PC-3 (cell line): ENCODE measurements at regions of chr6 and their contacts with region 1.

Region 1: GRCh38 chr6:68634726-68635411 is at the start of gene ADGRB3:
- DNase-seq: peak; percentile 51
- ATAC-seq: peak; percentile 63
- H3K4me3 ChIP-seq: peak within 1 kb of the TSS; percentile 72
- H3K27ac ChIP-seq: no peak within 1 kb of the TSS
- H3K4me1 ChIP-seq: no peaks in the 10 kb centered on the region
- H3K27me3 ChIP-seq: peaks cover 70% of the 10 kb centered on the region
- CTCF ChIP-seq: no peak
- total RNA-seq, gene ADGRB3: 0.11 and 0.23 TPM in 2 replicates

Region 2: DNA sequence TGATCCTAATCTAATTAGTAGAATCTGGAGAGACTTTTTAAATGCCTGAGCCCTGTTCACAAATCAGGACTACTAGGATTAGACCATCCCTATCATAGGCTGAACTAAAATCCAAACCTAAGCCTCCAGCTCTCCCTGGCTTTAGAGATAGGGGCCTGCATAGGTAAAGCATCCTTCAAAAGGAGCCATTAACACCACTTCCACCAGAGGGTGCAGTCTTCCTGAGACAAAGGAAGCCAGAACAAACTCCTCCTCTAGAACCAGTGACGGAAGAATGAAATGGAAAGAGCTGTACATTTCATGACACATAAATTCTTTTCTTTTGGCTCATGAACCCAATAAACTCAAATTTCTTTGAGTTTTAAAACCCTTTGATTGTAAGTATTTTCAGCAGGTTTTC is 291.0 kb before region 1 on chr6:
- CTCF ChIA-PET with region 1: interaction called, 3 read pairs
- POLR2A ChIA-PET with region 1: no interaction called
- intact Hi-C with region 1: loop called (anchors 1 kb)
- DNase-seq: peak; percentile 83
- ATAC-seq: peak; percentile 96
- H3K4me3 ChIP-seq: no peak overlapping the region
- H3K27ac ChIP-seq: no peak overlapping the region
- H3K4me1 ChIP-seq: no peaks in the 10 kb centered on the region
- H3K27me3 ChIP-seq: no peaks in the 10 kb centered on the region
- CTCF ChIP-seq: peak; percentile 81

Region 3: GRCh38 chr6:68559070-68559469 is 75.8 kb before region 1 on chr6:
- CTCF ChIA-PET with region 1: no interaction called
- POLR2A ChIA-PET with region 1: no interaction called
- intact Hi-C with region 1: loop called (anchors 1 kb)
- DNase-seq: peak; percentile 6
- ATAC-seq: peak; percentile 65
- H3K4me3 ChIP-seq: peak overlapping the region; percentile 31; the same call in 1 of the 2 replicates
- H3K27ac ChIP-seq: peak overlapping the region; percentile 50
- H3K4me1 ChIP-seq: peaks cover 6% of the 10 kb centered on the region
- H3K27me3 ChIP-seq: no peaks in the 10 kb centered on the region
- CTCF ChIP-seq: no peak

Region 4: GRCh38 chr6:68572525-68572924 is 62.3 kb before region 1 on chr6:
- CTCF ChIA-PET with region 1: interaction called, 3 read pairs
- POLR2A ChIA-PET with region 1: no interaction called
- intact Hi-C with region 1: loop called (anchors 1 kb)
- DNase-seq: peak; percentile 64
- ATAC-seq: peak; percentile 81
- H3K4me3 ChIP-seq: no peak overlapping the region
- H3K27ac ChIP-seq: no peak overlapping the region
- H3K4me1 ChIP-seq: no peaks in the 10 kb centered on the region
- H3K27me3 ChIP-seq: no peaks in the 10 kb centered on the region
- CTCF ChIP-seq: peak; percentile 63

Region 5: GRCh38 chr6:68680264-68680663 is 45.4 kb after region 1 on chr6:
- CTCF ChIA-PET with region 1: no interaction called
- POLR2A ChIA-PET with region 1: no interaction called
- intact Hi-C with region 1: no loop called
- DNase-seq: no peak
- ATAC-seq: no peak
- H3K4me3 ChIP-seq: no peak overlapping the region
- H3K27ac ChIP-seq: no peak overlapping the region
- H3K4me1 ChIP-seq: no peaks in the 10 kb centered on the region
- H3K27me3 ChIP-seq: no peaks in the 10 kb centered on the region
- CTCF ChIP-seq: no peak

Region 6: DNA sequence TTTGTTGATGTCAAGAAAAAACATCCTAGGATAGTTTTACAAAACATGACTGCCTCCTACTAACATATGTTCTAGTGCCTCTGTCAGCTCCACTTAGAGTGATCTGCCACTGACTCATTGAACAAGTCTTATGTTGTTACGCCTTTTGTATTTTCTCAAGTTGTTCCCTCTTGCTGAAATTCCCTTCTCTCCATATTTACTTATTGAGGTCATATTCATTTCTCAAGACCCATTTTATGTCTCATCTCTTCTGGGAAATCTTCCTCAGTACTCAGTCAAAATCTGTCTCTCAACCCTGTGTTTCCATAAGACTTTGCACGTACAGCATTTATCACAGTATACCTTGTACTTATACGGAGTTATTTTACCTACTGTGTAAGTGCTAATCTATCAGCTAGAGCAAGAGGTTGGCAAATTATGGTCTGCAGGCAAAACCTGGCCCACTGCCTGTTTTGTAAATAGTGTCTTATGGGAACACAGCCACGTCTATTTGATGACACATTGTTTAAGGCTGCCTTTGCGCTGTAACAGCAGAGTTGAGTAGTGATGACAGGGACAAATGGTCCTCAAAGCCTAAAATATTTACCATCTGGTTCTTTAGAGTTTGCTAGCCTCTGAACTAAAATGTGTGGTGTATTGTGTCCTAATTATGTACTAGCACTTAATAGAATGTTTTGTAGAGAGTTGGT is 83.7 kb after region 1 on chr6:
- CTCF ChIA-PET with region 1: no interaction called
- POLR2A ChIA-PET with region 1: no interaction called
- intact Hi-C with region 1: no loop called
- DNase-seq: peak; percentile 12
- ATAC-seq: peak; percentile 20; the same call in 1 of the 2 replicates
- H3K4me3 ChIP-seq: no peak overlapping the region
- H3K27ac ChIP-seq: peak overlapping the region; percentile 46
- H3K4me1 ChIP-seq: no peaks in the 10 kb centered on the region
- H3K27me3 ChIP-seq: no peaks in the 10 kb centered on the region
- CTCF ChIP-seq: no peak

Region 7: GRCh38 chr6:68778356-68779020 is 143.6 kb after region 1 on chr6:
- CTCF ChIA-PET with region 1: no interaction called
- POLR2A ChIA-PET with region 1: no interaction called
- intact Hi-C with region 1: loop called (anchors 1 kb)
- DNase-seq: peak; percentile 50
- ATAC-seq: peak; percentile 62
- H3K4me3 ChIP-seq: no peak overlapping the region
- H3K27ac ChIP-seq: no peak overlapping the region
- H3K4me1 ChIP-seq: no peaks in the 10 kb centered on the region
- H3K27me3 ChIP-seq: no peaks in the 10 kb centered on the region
- CTCF ChIP-seq: peak; percentile 68

Region 8: GRCh38 chr6:68958327-68958726 is 323.5 kb after region 1 on chr6:
- CTCF ChIA-PET with region 1: no interaction called
- POLR2A ChIA-PET with region 1: no interaction called
- intact Hi-C with region 1: loop called (anchors 2 kb)
- DNase-seq: peak; percentile 15
- ATAC-seq: no peak
- H3K4me3 ChIP-seq: no peak overlapping the region
- H3K27ac ChIP-seq: no peak overlapping the region
- H3K4me1 ChIP-seq: no peaks in the 10 kb centered on the region
- H3K27me3 ChIP-seq: no peaks in the 10 kb centered on the region
- CTCF ChIP-seq: peak; percentile 41; the same call in 1 of the 2 replicates

Region 9: DNA sequence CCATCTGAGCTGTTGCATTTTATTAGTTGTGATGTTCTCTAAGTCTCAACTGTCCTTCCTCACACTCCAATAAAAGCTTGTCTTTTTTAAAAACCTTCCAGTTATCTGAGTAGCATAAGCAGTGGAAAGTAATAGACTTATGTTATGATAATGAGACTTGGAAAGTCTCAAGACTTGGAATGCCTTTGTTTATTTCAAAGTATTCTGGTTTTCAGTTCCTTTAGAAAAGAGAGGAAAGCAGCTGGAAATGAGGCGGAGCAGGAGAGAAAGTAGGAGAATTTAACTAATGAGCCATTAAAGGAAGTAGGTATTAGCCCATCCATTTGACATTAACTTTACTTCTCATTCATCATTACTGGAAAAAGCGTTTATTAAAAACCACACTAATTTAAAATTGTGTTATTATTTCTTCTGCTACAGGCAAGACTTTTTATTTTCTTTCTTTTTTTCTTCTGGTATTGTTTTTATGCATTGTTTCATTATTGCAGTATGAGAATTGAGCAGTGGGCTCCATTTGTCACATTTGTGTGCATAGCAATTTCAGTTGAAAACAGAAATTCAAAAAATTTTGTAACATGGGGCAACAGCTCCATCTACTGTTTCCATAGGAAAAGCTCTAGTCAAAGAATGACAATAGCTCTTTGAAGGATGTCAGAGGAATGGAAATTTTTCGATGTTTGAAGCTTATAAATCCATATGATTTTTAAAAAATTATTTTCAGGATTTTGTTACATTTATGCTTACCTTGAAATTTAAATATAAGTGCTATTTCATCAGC is 1473.2 kb after region 1 on chr6:
- CTCF ChIA-PET with region 1: no interaction called
- POLR2A ChIA-PET with region 1: no interaction called
- intact Hi-C with region 1: loop called (anchors 5 kb)
- DNase-seq: peak; percentile 54
- ATAC-seq: no peak
- H3K4me3 ChIP-seq: no peak overlapping the region
- H3K27ac ChIP-seq: no peak overlapping the region
- H3K4me1 ChIP-seq: no peaks in the 10 kb centered on the region
- H3K27me3 ChIP-seq: peaks cover 14% of the 10 kb centered on the region; the same call in 1 of the 2 replicates
- CTCF ChIP-seq: peak; percentile 69